Heart left ventricle (tissue), 16 donors: ENCODE measurements at regions of chr10 and their contacts with region 1.

Region 1: GRCh38 chr10:67764012-67764822 is 68.2 kb upstream of the CTNNA3 start:
- DNase-seq: peak; percentile 92 to 93 (median 93)
- ATAC-seq: peak; percentile 93 to 96 (median 94)
- H3K4me3 ChIP-seq: peak overlapping the region; percentile 56 to 88 (median 75)
- H3K27ac ChIP-seq: peak overlapping the region; percentile 81 to 97 (median 95)
- H3K4me1 ChIP-seq: peaks cover 0 to 16% (median 4%) of the 10 kb centered on the region in 12 donors
- H3K27me3 ChIP-seq: no peaks in the 10 kb centered on the region
- CTCF ChIP-seq: no peak
- POLR2A ChIP-seq: no peak

Region 2: DNA sequence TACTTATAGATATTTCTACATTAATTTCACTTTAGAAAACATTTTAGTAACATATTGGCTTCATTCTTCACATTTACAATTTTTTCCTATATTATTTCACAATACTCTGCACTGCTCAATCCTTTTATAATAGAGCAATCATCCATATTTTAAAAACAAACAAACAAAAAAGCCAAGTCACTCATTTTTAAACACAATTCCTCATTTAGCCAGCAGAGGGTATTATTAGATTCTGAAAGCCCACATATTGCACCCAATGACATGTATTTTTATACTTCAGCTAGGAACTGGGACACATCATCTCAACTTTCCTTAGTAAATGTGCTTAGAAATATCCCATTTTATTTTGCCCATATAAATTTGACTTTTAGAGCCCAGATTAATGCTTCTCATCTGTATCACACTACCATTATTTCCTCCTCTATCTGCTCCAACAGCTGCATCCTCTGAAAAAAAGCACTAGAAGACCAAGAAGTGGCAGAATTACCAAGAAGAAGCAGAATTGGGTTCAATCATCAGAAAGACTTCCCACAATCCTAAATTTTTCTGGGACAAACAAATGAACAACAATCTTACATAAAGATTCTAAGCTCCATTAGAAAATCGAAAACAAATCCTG is 97.7 kb before region 1 on chr10:
- intact Hi-C with region 1: loop called in 2 of 10 experiments (anchors 5 to 10 kb)
- DNase-seq: no peak
- ATAC-seq: peak in 2 of 4 donors; percentile 56 to 57
- H3K4me3 ChIP-seq: no peak overlapping the region
- H3K27ac ChIP-seq: peak overlapping the region in 8 of 12 donors; percentile 41 to 72 (median 52)
- H3K4me1 ChIP-seq: peaks cover 0 to 52% (median 22%) of the 10 kb centered on the region in 12 donors
- H3K27me3 ChIP-seq: no peaks in the 10 kb centered on the region
- CTCF ChIP-seq: peak; percentile 31 to 65 (median 49)
- POLR2A ChIP-seq: no peak

Region 3: GRCh38 chr10:67697724-67698131 is 66.5 kb before region 1 on chr10:
- intact Hi-C with region 1: loop called in 3 of 10 experiments (anchors 5 kb)
- DNase-seq: peak in 1 of 5 donors; percentile 10
- ATAC-seq: peak in 2 of 4 donors; percentile 50 to 64
- H3K4me3 ChIP-seq: no peak overlapping the region
- H3K27ac ChIP-seq: peak overlapping the region in 3 of 12 donors; percentile 83 to 91 (median 88)
- H3K4me1 ChIP-seq: peaks cover 0 to 21% (median 4%) of the 10 kb centered on the region in 12 donors
- H3K27me3 ChIP-seq: peaks cover 0 to 7% (median 0%) of the 10 kb centered on the region in 9 donors
- CTCF ChIP-seq: peak; percentile 49 to 77 (median 68)
- POLR2A ChIP-seq: no peak

Region 4: GRCh38 chr10:67875340-67876238 is 111.4 kb after region 1 on chr10:
- intact Hi-C with region 1: no loop called
- DNase-seq: no peak
- ATAC-seq: no peak
- H3K4me3 ChIP-seq: no peak overlapping the region
- H3K27ac ChIP-seq: no peak overlapping the region
- H3K4me1 ChIP-seq: no peaks in the 10 kb centered on the region
- H3K27me3 ChIP-seq: no peaks in the 10 kb centered on the region
- CTCF ChIP-seq: no peak
- POLR2A ChIP-seq: no peak